GM10248 (cell line): ENCODE measurements at regions of chr7 and their contacts with region 1.

Region 1: GRCh38 chr7:22103255-22103969 is 157.7 kb upstream of the CDCA7L start:
- DNase-seq: peak; percentile 75
- CTCF ChIP-seq: peak; percentile 77

Region 2: GRCh38 chr7:22082886-22083703 is 20.3 kb before region 1 on chr7:
- CTCF ChIA-PET with region 1: interaction called, 51 read pairs
- POLR2A ChIA-PET with region 1: no interaction called
- DNase-seq: peak; percentile 89
- CTCF ChIP-seq: peak; percentile 96

Region 3: GRCh38 chr7:22193450-22193983 is 90.1 kb after region 1 on chr7:
- CTCF ChIA-PET with region 1: no interaction called
- POLR2A ChIA-PET with region 1: no interaction called
- DNase-seq: no peak
- CTCF ChIP-seq: no peak

Region 4: GRCh38 chr7:22488643-22489462 is 385.4 kb after region 1 on chr7:
- CTCF ChIA-PET with region 1: interaction called, 94 read pairs
- POLR2A ChIA-PET with region 1: no interaction called
- DNase-seq: peak; percentile 64
- CTCF ChIP-seq: peak; percentile 87

Region 5: DNA sequence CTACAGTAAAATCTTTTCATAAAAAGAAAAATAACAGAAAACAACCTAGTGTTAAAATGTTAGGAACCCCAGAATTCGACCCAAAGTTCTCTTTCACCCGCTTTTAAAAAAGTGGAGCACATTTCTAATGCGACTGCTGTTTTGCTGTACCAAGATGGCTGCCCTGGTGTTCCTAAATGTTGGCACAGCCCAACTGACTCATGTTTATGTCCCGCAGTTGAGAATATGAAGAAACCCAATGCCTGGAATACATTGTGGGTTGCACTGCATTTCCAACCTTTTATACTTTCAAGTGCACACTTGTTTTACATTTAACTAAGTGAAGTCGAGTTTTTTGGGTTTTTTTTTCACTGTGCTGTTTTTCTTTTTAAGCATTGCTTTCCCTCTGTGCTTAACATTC is 395.6 kb after region 1 on chr7:
- CTCF ChIA-PET with region 1: interaction called, 19 read pairs
- POLR2A ChIA-PET with region 1: no interaction called
- DNase-seq: no peak
- CTCF ChIP-seq: no peak